ENCODE measurements at regions of chr11 and their contacts with region 1.

Region 1: GRCh38 chr11:83681031-83681781 is 395.0 kb upstream of the CCDC90B start:
- DNase-seq: no peak
- ATAC-seq: no peak

Region 2: DNA sequence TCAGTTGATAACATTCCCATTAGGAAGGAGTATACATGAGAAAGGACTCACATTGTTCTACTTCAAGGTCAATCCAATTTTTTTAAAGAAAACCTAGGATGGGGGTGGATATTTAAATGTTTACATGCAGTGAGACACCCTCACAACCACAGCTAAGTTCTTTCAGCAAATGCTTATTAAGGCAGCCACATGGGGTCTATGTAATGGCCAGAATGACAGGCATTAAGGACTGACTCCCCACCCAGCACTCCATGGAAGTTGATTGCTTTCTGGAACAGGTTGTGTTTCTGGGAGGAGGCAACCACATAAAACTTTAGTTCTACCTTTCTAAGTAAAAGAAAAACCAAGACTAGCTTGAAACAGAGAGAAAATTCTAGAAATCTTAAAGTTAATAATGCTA is 267.0 kb after region 1 on chr11:
- intact Hi-C with region 1: loop called (anchors 10 kb)
- DNase-seq: no peak
- ATAC-seq: no peak